ENCODE measurements at regions of chr17 and their contacts with region 1.

Region 1: GRCh38 chr17:64281962-64282727 is 19.1 kb upstream of the TEX2 start:
- DNase-seq: peak; percentile 60 to 77 (median 74)
- ATAC-seq: peak; percentile 79
- H3K4me3 ChIP-seq: no peak overlapping the region
- H3K27ac ChIP-seq: no peak overlapping the region
- H3K4me1 ChIP-seq: peaks cover 10% of the 10 kb centered on the region
- H3K27me3 ChIP-seq: no peaks in the 10 kb centered on the region
- CTCF ChIP-seq: peak; percentile 59 to 91 (median 80)
- POLR2A ChIP-seq: no peak

Region 2: DNA sequence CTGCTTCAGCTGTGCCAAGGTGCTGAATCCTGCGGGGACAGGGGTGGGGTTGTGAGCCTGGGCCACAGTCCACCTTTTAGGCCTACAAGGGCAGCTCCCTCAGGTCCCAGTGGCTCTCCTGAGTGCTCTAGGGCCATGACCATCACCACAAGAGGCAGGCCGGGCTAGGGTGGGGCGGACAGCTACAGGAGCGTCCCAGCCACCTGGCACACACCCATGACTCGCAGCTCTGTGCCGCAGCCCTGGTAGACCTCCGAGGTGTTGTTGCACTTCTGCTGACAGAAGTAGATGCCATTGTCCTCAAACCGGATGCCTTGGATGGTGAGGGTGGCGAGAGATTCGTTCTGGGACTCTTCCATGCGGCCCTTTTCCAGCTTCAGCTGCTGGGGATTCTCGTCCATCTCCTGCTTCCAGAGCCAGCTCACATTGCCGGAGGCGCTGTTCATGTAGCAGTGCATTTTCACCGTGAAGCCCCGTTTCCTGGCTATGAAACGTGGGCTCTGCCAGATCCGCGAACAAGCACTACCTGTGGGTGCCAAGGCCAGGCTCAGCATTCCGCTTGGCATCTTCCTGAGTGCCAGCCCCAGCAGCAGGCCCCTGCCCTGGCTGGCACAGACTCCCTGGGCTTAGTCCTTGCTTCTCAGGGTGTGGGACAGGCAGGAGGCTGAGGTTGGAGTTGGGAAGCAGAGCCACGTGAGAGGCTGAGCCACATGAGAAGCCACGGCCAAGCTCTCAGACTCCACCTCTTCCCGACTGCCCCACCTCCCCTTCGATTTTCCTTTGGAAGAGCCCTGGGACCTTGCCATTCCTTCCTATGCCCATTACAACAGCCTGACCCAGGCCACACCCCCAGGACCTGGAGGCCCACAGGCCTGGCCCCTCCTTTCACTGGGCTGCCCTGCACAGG is 352.0 kb before region 1 on chr17:
- intact Hi-C with region 1: loop called (anchors 10 kb)
- DNase-seq: peak in 2 of 4 donors; percentile 10 to 22
- ATAC-seq: peak; percentile 25
- H3K4me3 ChIP-seq: no peak overlapping the region
- H3K27ac ChIP-seq: no peak overlapping the region
- H3K4me1 ChIP-seq: no peaks in the 10 kb centered on the region
- H3K27me3 ChIP-seq: no peaks in the 10 kb centered on the region
- CTCF ChIP-seq: no peak
- POLR2A ChIP-seq: no peak

Region 3: DNA sequence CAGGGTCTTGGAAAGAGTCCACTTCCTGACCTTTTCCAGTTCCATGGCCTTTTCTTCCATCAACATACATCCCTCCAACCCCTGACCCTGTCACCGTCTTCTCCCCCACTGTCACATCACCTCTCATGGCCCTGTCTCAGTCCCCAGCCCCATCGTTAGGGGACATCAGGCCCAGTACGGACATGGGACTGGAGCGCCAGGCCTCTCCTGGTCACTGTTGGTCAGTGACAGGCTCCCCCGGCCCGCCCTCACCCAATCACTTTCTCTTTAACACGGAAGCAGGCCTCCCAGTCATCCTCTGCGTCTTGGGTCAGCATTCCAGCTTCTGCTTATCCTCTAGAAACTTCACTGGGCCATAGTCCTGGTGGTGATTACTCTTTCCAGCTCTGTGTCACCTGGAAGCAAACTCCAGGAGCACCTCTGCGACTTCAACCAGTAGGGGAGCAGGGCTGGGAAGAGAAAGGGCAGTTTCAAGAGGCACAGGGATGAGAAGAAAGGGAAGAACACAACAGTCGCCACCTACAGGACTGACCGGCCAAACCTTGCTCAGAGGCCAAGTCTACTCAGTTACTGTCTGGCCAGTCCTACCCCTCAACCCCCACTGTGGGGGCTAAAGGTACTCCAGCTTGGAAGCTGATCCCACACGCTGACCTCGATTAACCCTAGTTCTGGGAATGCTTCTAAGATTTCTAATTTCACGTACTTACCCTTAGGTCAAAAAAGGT is 245.8 kb before region 1 on chr17:
- intact Hi-C with region 1: loop called (anchors 10 kb)
- DNase-seq: no peak
- ATAC-seq: no peak
- H3K4me3 ChIP-seq: no peak overlapping the region
- H3K27ac ChIP-seq: no peak overlapping the region
- H3K4me1 ChIP-seq: peaks cover 15% of the 10 kb centered on the region
- H3K27me3 ChIP-seq: no peaks in the 10 kb centered on the region
- CTCF ChIP-seq: no peak
- POLR2A ChIP-seq: no peak

Region 4: GRCh38 chr17:64160378-64160777 is 121.8 kb before region 1 on chr17:
- intact Hi-C with region 1: loop called (anchors 10 kb)
- DNase-seq: peak in 1 of 4 donors; percentile 6
- ATAC-seq: no peak
- H3K4me3 ChIP-seq: no peak overlapping the region
- H3K27ac ChIP-seq: peak overlapping the region in 1 of 4 donors; percentile 80
- H3K4me1 ChIP-seq: peaks cover 82% of the 10 kb centered on the region
- H3K27me3 ChIP-seq: no peaks in the 10 kb centered on the region
- CTCF ChIP-seq: no peak
- POLR2A ChIP-seq: no peak

Region 5: DNA sequence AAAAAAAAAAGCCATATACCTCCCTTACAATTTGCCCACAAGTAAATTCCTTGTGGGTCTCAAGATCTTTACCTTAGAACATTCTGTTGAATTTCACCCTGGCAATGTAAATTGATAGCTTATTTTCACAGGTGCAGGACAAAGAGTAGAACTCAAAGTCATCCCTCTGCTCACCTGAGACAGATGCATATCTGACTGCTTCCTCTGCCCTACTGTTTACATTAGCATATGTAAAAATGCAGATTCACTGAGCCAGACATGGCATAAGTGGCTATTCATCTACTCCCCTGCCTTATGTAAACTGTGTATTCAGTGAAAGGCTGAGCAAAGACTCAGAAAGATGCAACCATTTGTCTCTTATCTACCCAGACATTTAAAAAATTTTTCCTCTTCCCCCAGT is 144.4 kb after region 1 on chr17:
- intact Hi-C with region 1: no loop called
- DNase-seq: no peak
- ATAC-seq: no peak
- H3K4me3 ChIP-seq: no peak overlapping the region
- H3K27ac ChIP-seq: no peak overlapping the region
- H3K4me1 ChIP-seq: no peaks in the 10 kb centered on the region
- H3K27me3 ChIP-seq: no peaks in the 10 kb centered on the region
- CTCF ChIP-seq: no peak
- POLR2A ChIP-seq: no peak